ENCODE measurements at regions of chr2 and their contacts with region 1.

Region 1: DNA sequence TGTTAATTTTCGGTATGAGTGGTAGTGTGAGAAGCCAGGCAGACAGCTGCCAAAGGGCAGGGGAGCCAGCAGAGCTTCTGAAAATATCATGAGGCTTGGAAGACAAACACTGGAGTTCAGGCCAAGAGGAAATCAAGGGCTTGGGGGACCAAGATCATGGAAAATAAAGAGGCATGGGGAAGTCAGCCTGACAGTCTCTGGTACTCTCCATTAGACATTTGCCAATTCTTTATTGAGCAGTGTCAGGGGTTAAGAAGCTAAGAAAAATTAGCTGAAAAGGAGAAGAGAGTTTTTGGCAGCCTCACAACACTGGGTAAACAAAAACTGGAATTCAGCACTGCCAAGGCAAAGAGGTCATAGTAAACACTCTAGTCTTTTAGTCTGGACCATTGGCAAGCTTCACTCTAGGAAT is 612.7 kb downstream of the EPHA4 start:
- DNase-seq: no peak
- ATAC-seq: peak; percentile 75

Region 2: DNA sequence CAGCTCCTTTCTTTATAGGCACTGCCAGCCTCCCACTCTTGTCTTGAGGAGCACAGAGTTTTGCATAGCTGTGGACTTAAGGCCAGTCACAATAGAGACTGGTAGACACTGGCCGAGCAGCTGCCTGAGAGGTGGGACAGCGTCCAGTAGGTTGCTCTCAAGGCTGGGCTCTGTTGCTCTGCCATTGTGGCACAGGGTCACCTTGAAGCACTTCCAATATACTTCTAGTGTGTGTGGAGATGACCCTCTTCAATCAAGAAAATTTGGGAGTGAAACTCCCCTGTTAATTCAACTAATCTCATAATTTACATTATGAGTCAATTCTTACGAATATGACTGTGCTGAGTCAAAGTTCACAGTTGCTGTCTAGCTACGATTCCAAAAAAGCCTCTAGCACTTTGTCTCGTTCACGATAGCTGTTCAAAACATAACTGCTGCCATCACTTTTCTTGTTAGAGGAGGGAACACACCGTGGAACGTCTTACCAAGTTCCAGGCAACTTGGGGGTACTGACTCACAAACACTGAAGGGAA is 23.5 kb before region 1 on chr2:
- intact Hi-C with region 1: no loop called
- DNase-seq: no peak
- ATAC-seq: peak; percentile 56

Region 3: GRCh38 chr2:221068108-221068507 is 108.7 kb after region 1 on chr2:
- intact Hi-C with region 1: loop called (anchors 5 kb)
- DNase-seq: no peak
- ATAC-seq: no peak

Measured in Right ventricle myocardium inferior (tissue), 1 donor.